MCF 10A (cell line): ENCODE measurements at regions of chr10 and their contacts with region 1.

Region 1: DNA sequence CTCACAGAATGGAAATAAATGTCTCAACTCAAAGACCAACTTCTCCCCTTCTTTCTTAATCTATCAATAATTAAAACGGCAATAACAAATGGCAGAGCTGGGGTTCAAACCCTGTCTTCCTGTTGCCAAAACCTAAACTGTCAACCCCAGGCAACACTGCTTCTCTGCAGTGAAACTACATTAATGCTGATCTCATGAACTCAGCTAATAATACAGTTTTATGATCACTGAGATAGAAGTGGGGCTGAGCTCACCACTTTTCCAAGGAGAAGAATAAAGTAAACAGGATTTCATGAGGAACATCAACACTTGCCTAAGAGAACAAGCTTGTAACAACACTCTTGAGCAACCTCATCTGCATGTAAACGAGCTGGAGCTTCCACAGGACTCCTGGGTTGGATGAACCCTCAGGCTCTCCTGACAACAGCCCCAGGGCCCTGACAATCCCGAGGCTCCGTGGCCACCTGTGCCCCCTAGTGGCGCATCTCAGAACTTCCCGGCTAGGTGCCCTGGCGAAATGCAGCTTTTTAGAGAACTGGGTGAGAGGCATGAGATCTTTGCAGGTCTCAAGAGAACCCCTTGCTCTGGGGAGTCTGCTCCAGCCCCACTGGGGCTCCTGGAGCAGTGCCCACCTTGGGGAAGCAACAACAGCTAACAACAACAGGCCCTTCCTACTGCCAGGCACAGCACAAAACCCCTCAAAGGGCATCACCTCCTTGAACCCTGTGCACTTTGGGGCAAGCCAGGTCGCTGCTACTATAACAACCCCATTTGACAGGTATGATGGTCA is 169.3 kb downstream of the SH3PXD2A start:
- DNase-seq: peak; percentile 63
- H3K4me3 Mint-ChIP-seq: no peak overlapping the region
- H3K27ac Mint-ChIP-seq: peak overlapping the region; percentile 67
- H3K4me1 Mint-ChIP-seq: peaks cover 6% of the 10 kb centered on the region
- H3K27me3 Mint-ChIP-seq: no peaks in the 10 kb centered on the region
- CTCF ChIP-seq: peak; percentile 87

Region 2: DNA sequence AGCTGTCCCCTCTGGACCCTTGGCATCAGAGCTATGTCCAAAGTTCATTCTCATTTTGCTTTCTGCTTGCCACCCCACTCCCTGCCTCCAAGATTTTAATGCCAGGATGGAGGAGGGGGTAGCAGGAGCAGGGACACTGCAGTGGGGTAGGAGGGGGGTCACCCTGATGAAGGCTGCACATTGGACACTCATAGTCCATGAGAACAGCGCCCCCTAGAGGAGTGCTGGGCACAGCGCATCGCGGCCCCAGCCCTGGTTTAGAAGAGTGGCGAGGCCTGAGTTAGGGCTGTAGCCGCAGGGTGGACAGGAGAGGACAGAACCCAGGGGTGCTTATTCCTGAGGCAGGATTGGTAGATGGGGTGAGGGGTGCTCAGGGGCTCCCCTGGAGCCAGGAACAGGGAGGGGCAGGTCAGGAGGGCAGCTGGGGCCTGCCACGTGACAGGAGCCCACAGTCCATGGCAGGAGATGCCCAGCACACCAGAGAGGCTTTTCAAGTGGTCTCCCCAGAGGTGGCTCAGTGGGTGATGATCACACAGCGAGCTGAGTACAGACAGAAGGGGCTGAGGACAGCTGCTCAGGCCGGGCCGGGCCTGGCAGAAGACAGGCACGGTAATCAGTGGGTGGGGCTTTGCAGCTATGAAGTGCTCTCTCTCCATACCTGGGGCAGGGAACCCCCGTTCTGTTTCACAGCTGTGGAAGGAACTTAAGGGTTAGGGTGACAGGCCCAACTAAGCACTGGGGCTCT is 121.1 kb before region 1 on chr10:
- CTCF ChIA-PET with region 1: no interaction called
- POLR2A ChIA-PET with region 1: no interaction called
- intact Hi-C with region 1: no loop called
- DNase-seq: peak; percentile 42
- H3K4me3 Mint-ChIP-seq: no peak overlapping the region
- H3K27ac Mint-ChIP-seq: no peak overlapping the region
- H3K4me1 Mint-ChIP-seq: no peaks in the 10 kb centered on the region
- H3K27me3 Mint-ChIP-seq: peaks cover 17% of the 10 kb centered on the region
- CTCF ChIP-seq: peak; percentile 81

Region 3: GRCh38 chr10:103598654-103599115 is 87.4 kb before region 1 on chr10:
- CTCF ChIA-PET with region 1: interaction called, 57 read pairs
- POLR2A ChIA-PET with region 1: no interaction called
- intact Hi-C with region 1: loop called (anchors 1 kb)
- DNase-seq: peak; percentile 77
- H3K4me3 Mint-ChIP-seq: no peak overlapping the region
- H3K27ac Mint-ChIP-seq: no peak overlapping the region
- H3K4me1 Mint-ChIP-seq: peaks cover 6% of the 10 kb centered on the region
- H3K27me3 Mint-ChIP-seq: no peaks in the 10 kb centered on the region
- CTCF ChIP-seq: peak; percentile 69

Region 4: GRCh38 chr10:103616705-103617601 is 69.1 kb before region 1 on chr10:
- CTCF ChIA-PET with region 1: interaction called, 10 read pairs
- POLR2A ChIA-PET with region 1: no interaction called
- intact Hi-C with region 1: no loop called
- DNase-seq: peak; percentile 39
- H3K4me3 Mint-ChIP-seq: no peak overlapping the region
- H3K27ac Mint-ChIP-seq: no peak overlapping the region
- H3K4me1 Mint-ChIP-seq: no peaks in the 10 kb centered on the region
- H3K27me3 Mint-ChIP-seq: no peaks in the 10 kb centered on the region
- CTCF ChIP-seq: no peak

Region 5: DNA sequence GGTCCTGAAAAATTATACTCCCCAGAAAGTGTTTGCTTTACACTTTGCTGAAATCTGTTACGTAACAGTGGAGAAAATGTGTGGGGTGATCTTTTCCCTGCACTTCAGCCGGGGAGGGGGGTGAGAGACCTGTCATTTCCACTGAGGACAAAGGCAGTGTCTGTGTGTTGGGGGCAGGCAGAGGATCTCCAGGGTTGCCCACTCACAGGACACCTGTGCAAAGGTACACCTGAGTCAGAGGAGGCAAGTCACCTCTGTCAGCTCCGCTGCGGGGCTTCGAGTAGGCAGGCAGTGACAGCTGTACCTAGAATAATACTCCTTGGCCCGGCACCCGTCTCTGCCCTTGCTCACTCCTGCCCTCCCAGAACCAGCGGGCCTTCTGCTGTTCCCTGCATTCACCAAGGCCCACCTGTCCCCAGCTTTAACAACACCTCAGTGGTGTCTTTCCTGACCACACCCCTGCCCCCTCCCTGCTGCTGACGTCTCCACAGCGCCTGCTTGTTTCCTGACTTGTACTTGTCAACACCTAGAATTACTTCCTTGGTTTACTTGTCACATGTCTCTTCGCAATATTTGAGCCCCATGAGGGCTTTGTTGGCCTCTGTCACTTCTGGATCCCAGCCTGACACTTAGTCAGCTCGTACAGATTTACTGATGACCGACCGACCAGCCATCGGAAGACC is 33.3 kb before region 1 on chr10:
- CTCF ChIA-PET with region 1: interaction called, 11 read pairs
- POLR2A ChIA-PET with region 1: interaction called, 5 read pairs
- intact Hi-C with region 1: no loop called
- DNase-seq: no peak
- H3K4me3 Mint-ChIP-seq: no peak overlapping the region
- H3K27ac Mint-ChIP-seq: no peak overlapping the region
- H3K4me1 Mint-ChIP-seq: peaks cover 6% of the 10 kb centered on the region
- H3K27me3 Mint-ChIP-seq: no peaks in the 10 kb centered on the region
- CTCF ChIP-seq: no peak

Region 6: GRCh38 chr10:103666087-103666761 is 19.9 kb before region 1 on chr10:
- CTCF ChIA-PET with region 1: interaction called, 25 read pairs
- POLR2A ChIA-PET with region 1: interaction called, 6 read pairs
- intact Hi-C with region 1: no loop called
- DNase-seq: peak; percentile 37
- H3K4me3 Mint-ChIP-seq: no peak overlapping the region
- H3K27ac Mint-ChIP-seq: no peak overlapping the region
- H3K4me1 Mint-ChIP-seq: peaks cover 8% of the 10 kb centered on the region
- H3K27me3 Mint-ChIP-seq: no peaks in the 10 kb centered on the region
- CTCF ChIP-seq: no peak

Region 7: DNA sequence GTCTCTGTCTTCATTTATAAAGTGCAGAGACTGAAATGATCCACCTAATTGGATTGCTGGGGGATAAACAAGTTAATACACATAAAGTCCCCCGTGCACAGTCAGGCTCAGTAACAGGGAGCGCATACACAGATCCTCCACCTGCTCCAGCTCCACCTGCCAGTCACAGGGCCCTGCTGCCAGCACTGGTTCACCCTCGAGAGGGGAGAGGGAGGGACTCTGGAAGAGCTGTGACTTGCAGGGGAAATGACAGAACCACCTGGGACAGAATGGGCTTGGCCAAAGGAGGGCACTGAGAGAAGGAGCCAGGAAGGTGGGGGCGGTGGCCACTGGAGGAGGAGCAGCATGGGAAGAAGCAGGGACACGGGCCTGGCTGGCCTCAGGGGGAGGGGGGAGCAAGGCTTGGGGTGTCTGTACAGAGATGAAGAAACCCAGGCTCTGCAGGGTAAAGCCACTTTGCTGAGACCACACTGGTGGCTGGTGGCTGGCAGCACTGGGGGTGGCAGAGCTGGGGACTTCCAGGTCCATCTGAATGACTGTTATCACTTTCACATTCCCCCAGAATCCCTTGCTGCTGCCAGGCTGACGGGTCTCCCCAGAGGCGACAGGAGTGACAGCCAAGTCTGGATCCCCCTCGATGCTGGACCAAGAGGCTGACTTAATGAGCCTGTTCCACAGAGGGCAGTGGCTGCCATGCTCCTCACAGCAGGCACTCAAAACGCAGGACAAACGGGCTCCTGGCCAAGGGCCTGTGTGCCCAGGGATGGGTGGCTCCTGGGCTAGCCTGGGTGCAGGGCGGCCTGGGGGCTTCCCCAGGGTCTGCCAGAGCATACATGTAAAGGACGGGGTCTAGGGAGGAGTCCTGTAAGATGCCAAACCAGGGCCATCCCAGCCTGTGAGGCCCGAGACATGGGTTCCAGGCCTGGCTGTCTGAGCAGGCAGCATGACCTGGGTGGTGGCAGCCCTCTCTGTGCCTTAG is 18.2 kb after region 1 on chr10:
- CTCF ChIA-PET with region 1: interaction called, 19 read pairs
- POLR2A ChIA-PET with region 1: no interaction called
- intact Hi-C with region 1: no loop called
- DNase-seq: no peak
- H3K4me3 Mint-ChIP-seq: no peak overlapping the region
- H3K27ac Mint-ChIP-seq: no peak overlapping the region
- H3K4me1 Mint-ChIP-seq: peaks cover 2% of the 10 kb centered on the region
- H3K27me3 Mint-ChIP-seq: no peaks in the 10 kb centered on the region
- CTCF ChIP-seq: no peak

Region 8: GRCh38 chr10:104197364-104197763 is 511.3 kb after region 1 on chr10:
- CTCF ChIA-PET with region 1: no interaction called
- POLR2A ChIA-PET with region 1: no interaction called
- intact Hi-C with region 1: no loop called
- DNase-seq: peak; percentile 44
- H3K4me3 Mint-ChIP-seq: no peak overlapping the region
- H3K27ac Mint-ChIP-seq: no peak overlapping the region
- H3K4me1 Mint-ChIP-seq: peaks cover 5% of the 10 kb centered on the region
- H3K27me3 Mint-ChIP-seq: no peaks in the 10 kb centered on the region
- CTCF ChIP-seq: peak; percentile 3